GM10248 (cell line): ENCODE measurements at regions of chr16 and their contacts with region 1.

Region 1: GRCh38 chr16:66270333-66270927 is 96.1 kb upstream of the CDH5 start:
- DNase-seq: peak; percentile 87
- CTCF ChIP-seq: peak; percentile 81

Region 2: DNA sequence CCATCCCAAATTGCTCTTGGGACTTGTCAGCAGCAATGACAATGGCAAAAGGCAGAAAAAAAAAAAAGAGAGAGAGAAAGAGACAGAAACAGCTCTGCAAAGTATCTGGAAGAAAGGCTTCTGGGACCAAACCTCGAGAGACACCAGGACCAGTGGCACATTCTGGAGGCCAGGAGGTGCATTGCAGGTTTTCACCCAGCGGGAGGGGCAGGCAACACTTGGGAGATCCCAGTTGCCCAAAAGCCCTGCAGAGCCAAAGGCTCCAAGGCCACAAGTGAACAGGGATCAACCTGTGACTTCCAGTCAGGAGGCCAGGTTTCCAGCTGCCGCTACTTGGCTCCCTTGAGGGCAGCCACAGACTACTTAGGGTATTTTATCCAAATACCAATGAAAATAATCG is 14.8 kb before region 1 on chr16:
- CTCF ChIA-PET with region 1: interaction called, 11 read pairs
- POLR2A ChIA-PET with region 1: no interaction called
- DNase-seq: no peak
- CTCF ChIP-seq: no peak